CD8-positive, alpha-beta T cell (primary cell): ENCODE measurements at regions of chr2 and their contacts with region 1.

Region 1: GRCh38 chr2:163794635-163795034 is 58.8 kb upstream of the FIGN start:
- DNase-seq: no peak
- ATAC-seq: no peak
- H3K4me3 ChIP-seq: no peak overlapping the region
- H3K4me3 Mint-ChIP-seq: no peak overlapping the region
- H3K27ac ChIP-seq: no peak overlapping the region
- H3K27ac Mint-ChIP-seq: no peak overlapping the region
- H3K4me1 ChIP-seq: no peaks in the 10 kb centered on the region
- H3K4me1 Mint-ChIP-seq: no peaks in the 10 kb centered on the region
- H3K27me3 ChIP-seq: no peaks in the 10 kb centered on the region
- H3K27me3 Mint-ChIP-seq: no peaks in the 10 kb centered on the region
- CTCF ChIP-seq: no peak

Region 2: GRCh38 chr2:163778044-163778781 is 16.4 kb before region 1 on chr2:
- CTCF ChIA-PET with region 1: no interaction called
- POLR2A ChIA-PET with region 1: no interaction called
- intact Hi-C with region 1: loop called in 1 of 2 experiments (anchors 1 kb)
- DNase-seq: no peak
- ATAC-seq: no peak
- H3K4me3 ChIP-seq: no peak overlapping the region
- H3K4me3 Mint-ChIP-seq: no peak overlapping the region
- H3K27ac ChIP-seq: no peak overlapping the region
- H3K27ac Mint-ChIP-seq: no peak overlapping the region
- H3K4me1 ChIP-seq: no peaks in the 10 kb centered on the region
- H3K4me1 Mint-ChIP-seq: no peaks in the 10 kb centered on the region
- H3K27me3 ChIP-seq: no peaks in the 10 kb centered on the region
- H3K27me3 Mint-ChIP-seq: no peaks in the 10 kb centered on the region
- CTCF ChIP-seq: no peak